ENCODE measurements at regions of chr17 and their contacts with region 1.

Region 1: DNA sequence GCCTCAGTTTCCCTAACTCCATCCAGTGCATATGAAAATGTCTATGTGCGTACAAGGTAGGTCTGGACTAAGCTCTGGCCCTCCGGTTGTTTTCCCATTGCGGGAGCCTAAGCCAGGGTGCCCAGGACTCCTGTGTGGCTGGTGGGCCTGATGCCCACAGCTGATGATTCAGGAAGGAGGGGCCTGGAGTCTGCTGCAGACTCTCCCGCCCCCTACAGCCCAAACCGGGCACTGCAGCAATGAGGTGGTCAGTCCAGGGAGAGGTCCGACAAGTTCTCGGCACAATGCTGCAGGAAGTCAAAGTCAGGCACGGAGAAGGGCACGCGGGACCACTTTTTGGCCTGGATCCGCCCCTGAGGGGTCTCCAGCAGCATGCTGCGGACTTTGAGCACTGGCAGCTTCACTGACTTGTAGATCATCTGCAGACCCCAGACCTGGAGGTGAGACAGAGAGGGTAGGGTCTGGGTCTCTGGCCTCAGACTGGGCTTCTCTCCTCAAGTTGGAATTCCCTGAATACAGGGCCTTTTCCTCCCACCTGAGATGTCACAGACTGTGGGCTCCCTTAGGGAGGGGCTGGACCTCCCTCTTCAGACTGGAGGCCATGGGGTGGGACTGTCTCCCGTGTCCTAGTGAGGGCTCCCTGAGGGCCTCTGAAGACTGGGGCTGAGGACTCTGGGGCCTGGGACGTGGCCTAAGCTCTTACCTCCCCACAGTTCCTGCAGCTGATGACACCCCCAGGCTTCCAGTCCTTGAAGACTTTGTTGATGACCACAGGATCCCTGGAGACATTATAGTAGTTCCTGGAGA is 3.4 kb upstream of the ZNF385C start:
- DNase-seq: peak; percentile 77
- CTCF ChIP-seq: peak; percentile 84

Region 2: DNA sequence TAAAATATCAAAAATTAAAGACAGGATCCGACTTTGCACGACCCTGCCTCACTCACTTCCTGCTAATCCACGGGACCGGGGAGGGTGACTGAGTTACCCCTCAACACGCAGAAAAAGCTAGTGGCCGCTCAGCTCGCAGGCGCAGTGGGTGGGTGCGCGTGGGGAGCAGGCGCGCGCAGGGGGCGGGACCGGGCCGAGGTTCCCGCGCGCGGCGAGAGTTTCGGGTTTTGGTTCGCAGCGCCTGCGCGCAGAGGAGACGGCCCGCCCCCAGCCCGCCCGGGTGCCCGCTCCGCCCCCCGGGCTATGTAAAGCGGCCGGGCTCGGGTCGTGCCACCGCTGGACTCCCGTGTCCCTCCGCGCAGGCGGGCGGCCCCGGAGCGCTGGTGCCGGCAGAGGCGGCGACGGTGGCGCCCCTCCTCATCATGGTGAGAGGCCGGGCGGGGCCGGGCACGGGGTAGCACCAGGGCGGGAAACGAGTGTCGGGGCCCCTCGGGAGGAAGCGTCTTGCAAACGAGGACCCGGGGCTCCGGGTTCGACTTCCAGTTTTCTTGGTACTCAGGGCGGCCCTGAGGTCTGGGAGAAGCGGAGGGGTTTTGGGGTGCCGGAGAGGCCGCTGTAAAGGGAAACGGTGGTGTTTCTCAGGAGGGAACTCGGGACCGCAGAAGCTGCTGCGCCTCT is 135.1 kb before region 1 on chr17 and contains the start of gene CNP:
- CTCF ChIA-PET with region 1: interaction called, 19 read pairs
- POLR2A ChIA-PET with region 1: no interaction called
- DNase-seq: peak; percentile 97
- CTCF ChIP-seq: no peak

Region 3: DNA sequence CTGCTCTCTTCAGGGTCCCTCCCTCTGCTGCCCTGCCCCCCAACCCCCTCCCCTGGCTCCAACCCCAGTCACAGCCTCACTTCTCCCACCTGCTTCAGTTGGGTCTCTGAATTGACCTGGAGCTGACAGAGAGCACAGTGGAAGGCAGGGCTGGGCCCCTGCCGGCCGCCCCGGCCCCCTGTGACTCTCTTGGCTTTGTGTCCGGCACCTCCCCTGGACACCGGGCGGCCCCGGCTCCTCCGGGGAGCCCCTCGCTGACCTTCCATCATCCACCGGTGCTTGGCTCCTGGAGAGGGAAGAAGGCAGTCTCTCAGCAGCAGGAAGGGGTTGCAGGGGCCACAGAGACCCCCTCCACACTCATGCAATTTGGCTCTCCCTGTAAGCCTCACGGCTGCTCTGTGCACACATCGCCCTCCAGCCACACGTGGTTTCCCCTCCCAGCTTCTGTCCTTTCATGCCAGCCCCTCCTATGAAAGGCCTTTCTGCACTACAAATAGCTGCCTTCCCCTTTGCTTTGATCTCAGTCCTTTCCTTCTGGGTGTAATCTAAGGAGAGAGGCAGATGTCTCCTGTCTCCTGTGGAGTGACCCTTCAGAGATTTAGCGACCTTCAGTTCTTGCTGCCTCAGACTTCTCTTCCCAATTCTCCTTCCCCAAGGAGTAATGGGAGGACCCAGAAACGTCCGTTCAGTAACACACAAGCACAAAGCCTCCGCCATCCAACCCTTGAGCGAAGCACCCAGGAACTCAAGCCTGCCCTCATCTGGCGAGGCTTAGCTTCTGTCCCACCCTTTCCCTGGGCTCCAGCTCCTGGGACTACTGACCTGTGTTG is 73.5 kb before region 1 on chr17:
- CTCF ChIA-PET with region 1: interaction called, 62 read pairs
- POLR2A ChIA-PET with region 1: interaction called, 9 read pairs
- DNase-seq: no peak
- CTCF ChIP-seq: no peak

Region 4: DNA sequence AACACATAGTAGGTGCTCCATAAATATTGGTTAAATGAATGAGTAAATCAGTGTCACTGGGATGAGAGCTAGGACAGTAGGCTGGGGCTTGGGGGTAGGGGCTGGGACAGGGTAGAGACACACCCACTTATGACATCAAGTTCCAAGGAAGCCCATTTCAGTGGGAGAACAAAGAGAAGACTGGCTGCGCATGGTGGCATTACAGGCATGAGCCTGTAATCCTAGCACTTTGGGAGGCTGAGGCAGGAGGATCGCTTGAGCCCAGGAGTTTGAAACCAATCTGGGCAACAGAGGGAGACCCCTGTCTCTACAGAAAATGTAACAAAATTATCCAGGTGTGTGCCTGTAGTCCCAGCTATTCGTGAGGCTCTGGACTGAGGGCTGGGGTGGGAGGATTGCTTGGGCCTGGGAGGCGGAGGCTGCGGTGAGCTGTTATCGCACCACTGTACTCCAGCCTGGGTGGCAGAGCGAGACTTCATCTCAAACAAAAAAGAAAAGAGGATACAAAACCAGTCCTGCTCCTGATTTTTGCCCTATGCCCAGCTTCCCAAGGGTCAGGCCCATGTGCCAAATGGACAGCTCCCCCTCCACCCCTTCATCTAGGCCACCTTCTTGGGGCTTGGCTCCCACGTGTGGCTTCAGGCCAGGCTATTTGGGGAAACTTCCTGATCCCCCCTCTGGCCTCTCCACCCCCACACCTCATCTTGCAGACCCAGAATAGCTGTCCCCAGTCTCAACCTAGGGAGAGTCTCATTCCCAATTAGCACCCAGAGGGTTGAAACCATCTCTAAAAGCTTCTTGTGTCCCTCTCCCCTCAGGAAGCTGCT is 10.5 kb before region 1 on chr17:
- CTCF ChIA-PET with region 1: interaction called, 14 read pairs
- POLR2A ChIA-PET with region 1: no interaction called
- DNase-seq: no peak
- CTCF ChIP-seq: no peak

Region 5: GRCh38 chr17:42112552-42113176 is 10.9 kb after region 1 on chr17 and contains the start of gene DHX58:
- CTCF ChIA-PET with region 1: interaction called, 35 read pairs
- POLR2A ChIA-PET with region 1: no interaction called
- DNase-seq: peak; percentile 93
- CTCF ChIP-seq: no peak